HepG2 (cell line): ENCODE measurements at regions of chr6 and their contacts with region 1.

Region 1: GRCh38 chr6:137271245-137272183 is 52.3 kb upstream of the IFNGR1 start:
- DNase-seq: peak; percentile 75
- ATAC-seq: peak; percentile 85
- H3K4me3 ChIP-seq: no peak overlapping the region
- H3K27ac ChIP-seq: no peak overlapping the region
- H3K4me1 ChIP-seq: no peaks in the 10 kb centered on the region
- H3K27me3 ChIP-seq: no peaks in the 10 kb centered on the region
- CTCF ChIP-seq: peak; percentile 88
- EP300 ChIP-seq: no peak
- POLR2A ChIP-seq: no peak
- RAD21 ChIP-seq: peak; percentile 94

Region 2: GRCh38 chr6:137094411-137095008 is 177.0 kb before region 1 on chr6:
- CTCF ChIA-PET with region 1: interaction called, 8 read pairs
- POLR2A ChIA-PET with region 1: no interaction called
- in situ Hi-C with region 1: loop called (anchors 5 kb)
- intact Hi-C with region 1: loop called (anchors 1 kb)
- DNase-seq: peak; percentile 74
- ATAC-seq: peak; percentile 87
- H3K4me3 ChIP-seq: no peak overlapping the region
- H3K27ac ChIP-seq: no peak overlapping the region
- H3K4me1 ChIP-seq: peaks cover 8% of the 10 kb centered on the region; the same call in 1 of the 2 replicates
- H3K27me3 ChIP-seq: peaks cover 0 to 5% of the 10 kb centered on the region in 2 experiments; a peak in 1 of 5 replicates
- CTCF ChIP-seq: peak; percentile 85
- EP300 ChIP-seq: no peak; a peak in 1 of 4 replicates
- POLR2A ChIP-seq: no peak
- RAD21 ChIP-seq: peak; percentile 83

Region 3: GRCh38 chr6:137415127-137415833 is 143.8 kb after region 1 on chr6:
- CTCF ChIA-PET with region 1: interaction called, 11 read pairs
- POLR2A ChIA-PET with region 1: no interaction called
- in situ Hi-C with region 1: no loop called
- intact Hi-C with region 1: loop called (anchors 1 kb)
- DNase-seq: peak; percentile 50
- ATAC-seq: peak; percentile 92
- H3K4me3 ChIP-seq: peak overlapping the region in 2 of 3 experiments; percentile 0 to 41; a peak in 2 of 6 replicates
- H3K27ac ChIP-seq: peak overlapping the region; percentile 27
- H3K4me1 ChIP-seq: peaks cover 33% of the 10 kb centered on the region
- H3K27me3 ChIP-seq: no peaks in the 10 kb centered on the region
- CTCF ChIP-seq: peak; percentile 79
- EP300 ChIP-seq: no peak
- POLR2A ChIP-seq: no peak
- RAD21 ChIP-seq: peak; percentile 80

Region 4: GRCh38 chr6:137518386-137518983 is 247.0 kb after region 1 on chr6:
- CTCF ChIA-PET with region 1: no interaction called
- POLR2A ChIA-PET with region 1: no interaction called
- in situ Hi-C with region 1: no loop called
- intact Hi-C with region 1: loop called (anchors 10 kb)
- DNase-seq: no peak
- ATAC-seq: no peak
- H3K4me3 ChIP-seq: no peak overlapping the region
- H3K27ac ChIP-seq: no peak overlapping the region
- H3K4me1 ChIP-seq: no peaks in the 10 kb centered on the region
- H3K27me3 ChIP-seq: peaks cover 1 to 34% of the 10 kb centered on the region in 2 experiments; a peak in 4 of 5 replicates
- CTCF ChIP-seq: no peak
- EP300 ChIP-seq: no peak
- POLR2A ChIP-seq: no peak
- RAD21 ChIP-seq: no peak

Region 5: GRCh38 chr6:137589067-137589848 is 317.7 kb after region 1 on chr6:
- CTCF ChIA-PET with region 1: interaction called, 26 read pairs
- POLR2A ChIA-PET with region 1: no interaction called
- in situ Hi-C with region 1: loop called (anchors 10 kb)
- intact Hi-C with region 1: loop called (anchors 1 kb)
- DNase-seq: peak; percentile 92
- ATAC-seq: peak; percentile 100
- H3K4me3 ChIP-seq: no peak overlapping the region; a peak in 1 of 6 replicates
- H3K27ac ChIP-seq: no peak overlapping the region
- H3K4me1 ChIP-seq: peaks cover 16% of the 10 kb centered on the region
- H3K27me3 ChIP-seq: no peaks in the 10 kb centered on the region
- CTCF ChIP-seq: peak; percentile 91
- EP300 ChIP-seq: peak in 1 of 2 experiments; percentile 36; a peak in 2 of 4 replicates
- POLR2A ChIP-seq: no peak
- RAD21 ChIP-seq: peak; percentile 84

Region 6: DNA sequence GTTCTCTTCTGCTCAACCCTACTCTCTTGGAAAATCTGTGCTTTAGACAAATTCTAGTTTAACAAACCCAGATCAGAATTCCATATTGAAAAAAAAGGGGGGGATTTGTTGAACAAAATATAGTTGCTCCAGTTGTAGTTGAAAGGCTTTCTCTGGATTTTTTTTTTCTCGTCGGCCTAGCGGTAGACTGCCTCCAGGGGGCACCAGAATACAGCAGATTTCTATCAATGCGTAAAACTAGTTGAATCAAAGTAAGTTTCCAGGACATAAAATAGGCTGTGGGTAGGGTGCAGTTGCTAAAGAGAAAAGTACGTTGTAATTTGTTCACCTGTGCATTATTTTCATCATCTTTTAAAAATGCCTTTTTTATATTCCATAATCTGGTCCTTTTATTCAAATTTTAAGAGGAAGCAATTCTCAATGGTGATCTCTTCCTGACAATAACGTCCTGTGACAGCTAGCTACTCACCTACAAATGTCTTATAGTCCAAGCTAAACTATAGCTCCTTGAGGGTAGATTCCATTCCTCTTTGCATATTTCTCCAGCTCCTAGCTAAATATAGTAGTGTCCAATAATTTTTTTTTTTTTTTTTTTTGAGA is 730.3 kb after region 1 on chr6:
- CTCF ChIA-PET with region 1: no interaction called
- POLR2A ChIA-PET with region 1: no interaction called
- in situ Hi-C with region 1: no loop called
- intact Hi-C with region 1: loop called (anchors 1 kb)
- DNase-seq: peak; percentile 44
- ATAC-seq: peak; percentile 51
- H3K4me3 ChIP-seq: no peak overlapping the region
- H3K27ac ChIP-seq: no peak overlapping the region
- H3K4me1 ChIP-seq: 0 out of 2 replicates have a peak, but pooled peaks cover 6% of the 10 kb centered on the region
- H3K27me3 ChIP-seq: no peaks in the 10 kb centered on the region
- CTCF ChIP-seq: peak; percentile 88
- EP300 ChIP-seq: no peak
- POLR2A ChIP-seq: no peak
- RAD21 ChIP-seq: peak; percentile 87